Caco-2 (cell line): ENCODE measurements at regions of chr17 and their contacts with region 1.

Region 1: GRCh38 chr17:77285520-77286390 is 145.0 kb downstream of the SEC14L1 start:
- DNase-seq: no peak
- H3K4me3 ChIP-seq: no peak overlapping the region
- H3K4me3 Mint-ChIP-seq: no peak overlapping the region
- H3K27ac Mint-ChIP-seq: peak overlapping the region; percentile 21
- H3K4me1 ChIP-seq: peaks cover 74% of the 10 kb centered on the region
- H3K4me1 Mint-ChIP-seq: peaks cover 49% of the 10 kb centered on the region
- H3K27me3 ChIP-seq: no peaks in the 10 kb centered on the region
- H3K27me3 Mint-ChIP-seq: no peaks in the 10 kb centered on the region
- CTCF ChIP-seq: no peak

Region 2: GRCh38 chr17:77247048-77247541 is 38.7 kb before region 1 on chr17:
- CTCF ChIA-PET with region 1: no interaction called
- POLR2A ChIA-PET with region 1: no interaction called
- intact Hi-C with region 1: no loop called
- DNase-seq: peak; percentile 80 to 92
- H3K4me3 ChIP-seq: peak overlapping the region; percentile 64
- H3K4me3 Mint-ChIP-seq: peak overlapping the region; percentile 64
- H3K27ac Mint-ChIP-seq: peak overlapping the region; percentile 10
- H3K4me1 ChIP-seq: peaks cover 9% of the 10 kb centered on the region
- H3K4me1 Mint-ChIP-seq: no peaks in the 10 kb centered on the region
- H3K27me3 ChIP-seq: no peaks in the 10 kb centered on the region
- H3K27me3 Mint-ChIP-seq: peaks cover 3% of the 10 kb centered on the region
- CTCF ChIP-seq: peak; percentile 92 to 98

Region 3: DNA sequence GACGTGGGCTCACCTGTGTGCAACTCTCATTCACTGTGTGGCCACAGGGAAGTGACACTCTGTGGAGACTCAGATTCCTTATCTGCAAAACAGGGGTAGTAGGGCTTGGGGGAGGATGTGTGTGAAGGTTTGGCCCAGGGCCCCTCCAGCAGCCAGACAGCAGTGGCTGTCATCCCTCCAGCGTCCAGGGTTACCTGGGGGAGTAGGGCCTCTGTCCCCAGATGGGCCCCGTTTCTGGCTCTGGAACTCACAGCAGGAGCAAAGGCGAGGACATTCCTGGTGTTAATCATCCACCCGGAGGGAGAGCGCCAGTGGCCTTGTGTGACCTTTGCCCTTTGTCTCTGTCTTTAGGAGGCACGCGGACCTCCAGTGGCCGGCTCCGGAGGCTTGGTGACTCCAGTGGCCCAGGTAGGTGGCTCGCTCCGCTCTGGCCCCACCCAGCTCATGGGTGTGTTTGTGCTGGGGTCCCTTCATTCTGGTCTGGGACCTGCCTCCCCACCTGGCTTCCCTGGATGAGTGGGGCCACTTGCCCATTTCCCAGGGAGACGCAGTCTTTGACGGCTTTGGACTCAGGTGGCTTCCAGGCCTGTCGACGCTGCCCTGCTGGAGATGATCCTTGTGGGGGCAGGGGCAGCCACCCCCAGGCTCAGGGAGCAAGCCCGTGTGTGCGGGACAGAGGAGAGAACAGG is 21.2 kb after region 1 on chr17:
- CTCF ChIA-PET with region 1: interaction called, 4 read pairs
- POLR2A ChIA-PET with region 1: interaction called, 11 read pairs
- intact Hi-C with region 1: loop called (anchors 2 kb)
- DNase-seq: peak; percentile 93 to 98
- H3K4me3 ChIP-seq: no peak overlapping the region
- H3K4me3 Mint-ChIP-seq: peak overlapping the region; percentile 58
- H3K27ac Mint-ChIP-seq: peak overlapping the region; percentile 89
- H3K4me1 ChIP-seq: peaks cover 65% of the 10 kb centered on the region
- H3K4me1 Mint-ChIP-seq: peaks cover 61% of the 10 kb centered on the region
- H3K27me3 ChIP-seq: no peaks in the 10 kb centered on the region
- H3K27me3 Mint-ChIP-seq: no peaks in the 10 kb centered on the region
- CTCF ChIP-seq: peak in 1 of 2 experiments; percentile 13

Region 4: GRCh38 chr17:77322514-77323412 is 37.0 kb after region 1 on chr17:
- CTCF ChIA-PET with region 1: interaction called, 4 read pairs
- POLR2A ChIA-PET with region 1: no interaction called
- intact Hi-C with region 1: loop called (anchors 2 kb)
- DNase-seq: peak; percentile 81 to 87
- H3K4me3 ChIP-seq: no peak overlapping the region
- H3K4me3 Mint-ChIP-seq: peak overlapping the region; percentile 56
- H3K27ac Mint-ChIP-seq: peak overlapping the region; percentile 96
- H3K4me1 ChIP-seq: peaks cover 59% of the 10 kb centered on the region
- H3K4me1 Mint-ChIP-seq: peaks cover 61% of the 10 kb centered on the region
- H3K27me3 ChIP-seq: no peaks in the 10 kb centered on the region
- H3K27me3 Mint-ChIP-seq: no peaks in the 10 kb centered on the region
- CTCF ChIP-seq: no peak